HepG2 (cell line): ENCODE measurements at regions of chr13 and their contacts with region 1.

Region 1: GRCh38 chr13:42048682-42049453 is 420 bp downstream of the DGKH start:
- DNase-seq: no peak
- ATAC-seq: peak; percentile 86
- H3K4me3 ChIP-seq: peak overlapping the region; percentile 54 to 81 (median 67)
- H3K27ac ChIP-seq: no peak overlapping the region
- H3K4me1 ChIP-seq: peaks cover 9% of the 10 kb centered on the region
- H3K27me3 ChIP-seq: peaks cover 6 to 28% of the 10 kb centered on the region in 2 experiments
- CTCF ChIP-seq: peak; percentile 32; the same call in 1 of the 2 replicates
- EP300 ChIP-seq: no peak
- POLR2A ChIP-seq: no peak
- RAD21 ChIP-seq: peak; percentile 51

Region 2: DNA sequence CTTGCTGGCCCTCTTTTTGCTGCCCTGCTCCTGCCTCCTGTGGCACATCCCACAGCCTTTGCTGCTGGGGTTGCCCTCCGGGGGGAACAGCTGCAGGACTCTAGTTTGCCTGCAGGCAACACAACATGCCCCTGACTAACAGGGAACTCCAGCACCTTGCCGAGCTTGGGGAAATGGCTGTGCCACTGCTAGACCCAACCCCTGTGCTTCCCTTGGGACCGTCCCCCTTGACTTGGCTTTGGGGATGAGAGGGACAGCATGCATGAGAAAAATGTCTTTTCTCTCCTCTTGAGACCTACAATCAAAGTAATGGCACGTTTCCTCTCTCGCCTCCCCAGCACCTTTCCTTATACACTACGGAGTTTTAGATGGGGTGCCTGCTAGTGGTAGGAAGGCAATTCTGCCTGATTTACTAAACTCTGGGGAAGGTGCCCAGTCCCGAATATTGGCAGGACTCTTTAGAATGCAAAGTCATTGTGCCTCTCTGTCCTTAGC is 75.6 kb before region 1 on chr13:
- CTCF ChIA-PET with region 1: no interaction called
- POLR2A ChIA-PET with region 1: no interaction called
- in situ Hi-C with region 1: no loop called
- intact Hi-C with region 1: loop called (anchors 5 kb)
- DNase-seq: no peak
- ATAC-seq: peak; percentile 92
- H3K4me3 ChIP-seq: peak overlapping the region; percentile 29 to 70 (median 53); a peak in 5 of 6 replicates
- H3K27ac ChIP-seq: no peak overlapping the region
- H3K4me1 ChIP-seq: peaks cover 37% of the 10 kb centered on the region
- H3K27me3 ChIP-seq: no peaks in the 10 kb centered on the region
- CTCF ChIP-seq: peak; percentile 51
- EP300 ChIP-seq: no peak
- POLR2A ChIP-seq: no peak
- RAD21 ChIP-seq: no peak

Region 3: GRCh38 chr13:42078128-42078808 is 29.4 kb after region 1 on chr13:
- CTCF ChIA-PET with region 1: no interaction called
- POLR2A ChIA-PET with region 1: no interaction called
- in situ Hi-C with region 1: no loop called
- intact Hi-C with region 1: no loop called
- DNase-seq: peak; percentile 23
- ATAC-seq: peak; percentile 90
- H3K4me3 ChIP-seq: no peak overlapping the region
- H3K27ac ChIP-seq: no peak overlapping the region
- H3K4me1 ChIP-seq: no peaks in the 10 kb centered on the region
- H3K27me3 ChIP-seq: no peaks in the 10 kb centered on the region
- CTCF ChIP-seq: peak; percentile 61
- EP300 ChIP-seq: no peak
- POLR2A ChIP-seq: no peak
- RAD21 ChIP-seq: no peak